AG04450 (cell line): ENCODE measurements at regions of chr2 and their contacts with region 1.

Region 1: DNA sequence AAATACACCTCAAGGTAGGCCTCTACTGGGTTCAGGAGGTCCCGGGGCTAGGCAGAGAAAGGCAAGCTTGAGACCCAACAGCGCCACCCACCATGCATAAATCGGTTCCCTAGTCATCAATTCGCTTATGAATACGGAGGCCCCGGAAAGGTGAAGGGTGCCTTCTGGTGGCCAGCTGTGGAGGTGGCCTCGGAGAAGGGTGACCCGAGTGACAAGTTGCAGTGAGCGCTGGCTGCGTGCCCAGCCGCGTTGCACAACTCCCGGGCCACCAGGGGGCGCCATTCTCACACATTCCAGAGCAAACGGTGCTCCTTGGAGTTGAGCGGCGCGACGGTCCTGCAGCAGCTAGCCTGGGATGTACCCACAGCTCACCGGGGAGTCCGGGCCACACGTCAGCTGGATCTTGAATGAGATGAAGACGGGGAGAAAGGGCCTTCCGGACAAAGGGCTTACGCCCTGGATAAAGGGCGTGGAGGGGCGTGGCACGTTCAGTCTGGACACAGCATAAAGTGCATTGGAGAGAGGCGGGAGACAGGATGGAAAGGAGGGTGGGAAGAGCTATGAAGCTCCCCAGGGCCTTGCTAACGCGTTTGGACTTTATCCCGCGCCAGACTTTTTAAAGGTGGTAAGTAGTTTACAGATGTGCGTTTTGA is 20.4 kb downstream of the TMSB10 start:
- DNase-seq: no peak
- H3K4me3 ChIP-seq: peak overlapping the region; percentile 57
- H3K27ac ChIP-seq: no peak overlapping the region
- H3K27me3 ChIP-seq: no peaks in the 10 kb centered on the region
- CTCF ChIP-seq: peak; percentile 89

Region 2: DNA sequence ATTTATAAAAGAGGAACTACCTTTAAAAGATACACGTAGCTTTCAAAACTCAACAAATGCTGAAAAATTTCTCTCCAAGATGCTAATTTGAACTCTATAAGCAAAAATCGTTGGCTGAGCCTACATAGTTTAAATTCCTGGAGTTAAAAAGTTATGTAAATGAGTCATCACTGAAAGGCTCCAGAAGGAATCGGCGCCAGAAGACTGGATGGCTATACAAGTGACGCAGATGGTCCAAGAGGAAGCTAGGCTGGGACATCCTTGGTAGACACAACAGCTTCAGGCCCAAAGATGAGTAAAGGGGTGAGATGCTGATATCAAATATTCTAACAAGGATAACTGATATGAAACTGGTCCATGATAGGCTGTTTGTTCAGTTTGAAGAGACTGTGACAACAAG is 432.3 kb before region 1 on chr2:
- CTCF ChIA-PET with region 1: interaction called, 19 read pairs
- POLR2A ChIA-PET with region 1: no interaction called
- DNase-seq: peak; percentile 79
- H3K4me3 ChIP-seq: no peak overlapping the region
- H3K27ac ChIP-seq: peak overlapping the region; percentile 42
- H3K27me3 ChIP-seq: no peaks in the 10 kb centered on the region
- CTCF ChIP-seq: no peak

Region 3: GRCh38 chr2:84776011-84776410 is 149.8 kb before region 1 on chr2:
- CTCF ChIA-PET with region 1: no interaction called
- POLR2A ChIA-PET with region 1: no interaction called
- DNase-seq: no peak
- H3K4me3 ChIP-seq: no peak overlapping the region
- H3K27ac ChIP-seq: no peak overlapping the region
- H3K27me3 ChIP-seq: no peaks in the 10 kb centered on the region
- CTCF ChIP-seq: no peak

Region 4: DNA sequence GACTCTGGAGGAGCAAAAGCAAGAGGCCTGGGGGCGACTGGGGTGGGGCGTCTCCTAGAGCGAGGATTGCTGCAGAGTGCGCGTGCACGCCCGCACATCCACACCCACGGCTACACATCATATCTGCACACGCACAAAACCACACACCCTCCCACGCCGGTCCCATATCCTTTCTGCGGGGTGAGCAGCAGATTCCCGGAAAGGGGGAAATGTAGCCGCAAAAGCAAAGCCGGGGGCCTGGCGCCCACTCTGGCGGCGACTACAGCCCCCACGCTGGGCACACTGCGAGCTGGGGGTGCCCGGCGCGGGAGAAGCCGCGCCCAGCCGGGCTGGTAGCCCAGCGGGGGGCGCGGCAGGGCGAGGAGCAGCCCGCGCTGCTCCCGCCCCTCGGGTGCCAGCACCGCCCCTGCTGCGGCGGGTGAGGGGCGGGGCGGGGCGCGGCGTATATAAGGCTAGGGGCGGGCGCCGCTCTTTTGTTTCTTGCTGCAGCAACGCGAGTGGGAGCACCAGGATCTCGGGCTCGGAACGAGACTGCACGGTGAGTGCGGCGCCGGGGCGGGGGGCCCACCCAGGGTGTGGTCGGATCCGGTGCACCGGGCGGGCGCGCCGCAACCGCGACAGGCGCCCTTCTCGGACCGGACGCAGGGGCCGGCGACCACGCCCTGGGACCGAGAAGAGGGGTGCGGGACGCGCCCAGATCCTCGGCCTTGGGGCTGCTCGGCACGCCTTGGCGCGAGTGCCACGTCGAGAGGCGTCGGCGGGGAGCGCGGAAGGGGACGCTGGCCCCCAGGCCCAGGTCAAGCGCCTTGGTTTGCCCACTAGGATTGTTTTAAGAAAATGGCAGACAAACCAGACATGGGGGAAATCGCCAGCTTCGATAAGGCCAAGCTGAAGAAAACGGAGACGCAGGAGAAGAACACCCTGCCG is 20.4 kb before region 1 on chr2 and contains the start of gene TMSB10:
- CTCF ChIA-PET with region 1: interaction called, 19 read pairs
- POLR2A ChIA-PET with region 1: interaction called, 45 read pairs
- DNase-seq: no peak
- H3K4me3 ChIP-seq: peak within 1 kb of the TSS; percentile 98
- H3K27ac ChIP-seq: peak within 1 kb of the TSS; percentile 80
- H3K27me3 ChIP-seq: no peaks in the 10 kb centered on the region
- CTCF ChIP-seq: no peak
- polyA plus RNA-seq, gene TMSB10: 4,621 and 5,651 TPM in 2 replicates

Region 5: DNA sequence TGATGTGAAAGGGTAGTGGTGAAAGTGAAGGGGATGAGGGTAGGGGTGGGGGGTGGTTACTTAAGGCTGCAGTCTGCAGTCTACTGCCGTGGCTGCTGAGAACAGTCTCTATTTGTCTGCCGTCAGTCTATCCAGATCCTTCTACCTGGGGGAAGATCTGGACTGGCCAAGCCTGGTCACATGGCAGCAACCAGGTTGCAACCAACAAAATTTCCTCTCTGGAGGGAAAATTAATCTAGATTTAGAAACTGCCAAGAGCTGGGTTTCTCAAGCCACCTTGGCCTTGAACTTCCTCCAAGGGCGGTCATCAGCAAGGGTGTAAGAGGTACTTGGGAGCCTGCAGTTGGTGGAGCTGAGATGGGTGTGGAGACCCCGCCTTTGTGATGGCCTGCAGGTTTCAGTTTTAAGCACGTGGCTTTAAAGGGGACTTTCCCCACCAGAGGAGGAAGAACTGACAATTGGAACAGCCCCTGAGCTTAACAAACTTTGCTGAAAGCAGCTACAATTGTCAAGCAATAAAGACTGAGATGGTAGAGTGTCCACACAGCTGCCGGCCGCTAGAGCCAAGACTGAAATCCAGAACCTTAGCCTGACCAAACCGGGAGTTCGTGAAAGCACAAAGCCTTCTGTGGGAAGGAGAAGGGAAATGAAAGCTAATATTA is 13.7 kb after region 1 on chr2:
- CTCF ChIA-PET with region 1: interaction called, 28 read pairs
- POLR2A ChIA-PET with region 1: interaction called, 3 read pairs
- DNase-seq: no peak
- H3K4me3 ChIP-seq: no peak overlapping the region
- H3K27ac ChIP-seq: no peak overlapping the region
- H3K27me3 ChIP-seq: no peaks in the 10 kb centered on the region
- CTCF ChIP-seq: no peak

Region 6: GRCh38 chr2:84958135-84959044 is 32.5 kb after region 1 on chr2:
- CTCF ChIA-PET with region 1: interaction called, 16 read pairs
- POLR2A ChIA-PET with region 1: no interaction called
- DNase-seq: peak; percentile 70
- H3K4me3 ChIP-seq: no peak overlapping the region
- H3K27ac ChIP-seq: peak overlapping the region; percentile 95
- H3K27me3 ChIP-seq: no peaks in the 10 kb centered on the region
- CTCF ChIP-seq: no peak

Region 7: GRCh38 chr2:85106507-85107215 is 180.8 kb after region 1 on chr2:
- CTCF ChIA-PET with region 1: no interaction called
- POLR2A ChIA-PET with region 1: no interaction called
- DNase-seq: peak; percentile 47
- H3K4me3 ChIP-seq: no peak overlapping the region
- H3K27ac ChIP-seq: no peak overlapping the region
- H3K27me3 ChIP-seq: no peaks in the 10 kb centered on the region
- CTCF ChIP-seq: no peak